ENCODE measurements at regions of chr12 and their contacts with region 1.

Region 1: DNA sequence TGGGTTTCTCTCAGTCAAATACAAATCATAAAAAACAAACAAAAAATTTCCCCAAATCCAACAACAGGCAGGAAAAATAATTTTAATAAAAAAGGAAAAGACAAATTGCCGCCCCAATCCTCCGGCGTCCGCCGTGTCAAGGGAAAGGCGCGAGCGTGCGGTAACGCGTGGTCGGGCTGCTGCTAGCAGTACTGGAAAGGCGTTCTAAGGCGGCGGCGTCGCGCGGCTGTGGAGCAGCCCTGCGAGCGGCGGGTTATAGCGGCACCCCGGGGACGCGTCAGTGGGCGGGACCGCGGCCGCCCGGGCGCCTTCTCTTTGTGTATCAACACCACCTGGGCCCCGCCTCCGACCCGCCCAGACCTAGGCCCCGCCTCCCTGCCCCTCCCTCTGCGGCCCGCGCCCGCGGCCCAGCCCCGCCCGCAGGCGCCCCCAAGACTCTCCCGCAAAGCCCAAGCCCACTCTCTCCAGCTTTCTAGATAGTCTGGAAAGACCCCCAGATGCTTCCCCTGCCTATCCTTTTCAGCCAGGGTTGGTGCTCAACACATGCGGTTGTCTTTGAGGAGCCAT is at the start of gene SLC38A2:
- DNase-seq: peak; percentile 97
- H3K4me3 Mint-ChIP-seq: peak within 1 kb of the TSS; percentile 96
- H3K27ac Mint-ChIP-seq: peak within 1 kb of the TSS; percentile 98
- H3K4me1 Mint-ChIP-seq: peaks cover 51% of the 10 kb centered on the region
- H3K27me3 Mint-ChIP-seq: no peaks in the 10 kb centered on the region
- total RNA-seq, gene SLC38A2: 196 to 206 TPM

Region 2: GRCh38 chr12:46209914-46210872 is 162.4 kb before region 1 on chr12:
- CTCF ChIA-PET with region 1: no interaction called
- intact Hi-C with region 1: loop called (anchors 1 kb)
- DNase-seq: peak; percentile 87
- H3K4me3 Mint-ChIP-seq: peak overlapping the region; percentile 60
- H3K27ac Mint-ChIP-seq: peak overlapping the region; percentile 99
- H3K4me1 Mint-ChIP-seq: peaks cover 84% of the 10 kb centered on the region
- H3K27me3 Mint-ChIP-seq: no peaks in the 10 kb centered on the region

Region 3: GRCh38 chr12:46357438-46358324 is 14.9 kb before region 1 on chr12:
- CTCF ChIA-PET with region 1: interaction called, 3 read pairs
- intact Hi-C with region 1: loop called (anchors 1 kb)
- DNase-seq: no peak
- H3K4me3 Mint-ChIP-seq: no peak overlapping the region
- H3K27ac Mint-ChIP-seq: no peak overlapping the region
- H3K4me1 Mint-ChIP-seq: peaks cover 21% of the 10 kb centered on the region
- H3K27me3 Mint-ChIP-seq: no peaks in the 10 kb centered on the region

Region 4: GRCh38 chr12:46459861-46460545 is 87.4 kb after region 1 on chr12:
- CTCF ChIA-PET with region 1: no interaction called
- intact Hi-C with region 1: loop called (anchors 1 kb)
- DNase-seq: peak; percentile 48
- H3K4me3 Mint-ChIP-seq: peak overlapping the region; percentile 71
- H3K27ac Mint-ChIP-seq: peak overlapping the region; percentile 91
- H3K4me1 Mint-ChIP-seq: peaks cover 64% of the 10 kb centered on the region
- H3K27me3 Mint-ChIP-seq: no peaks in the 10 kb centered on the region

Region 5: DNA sequence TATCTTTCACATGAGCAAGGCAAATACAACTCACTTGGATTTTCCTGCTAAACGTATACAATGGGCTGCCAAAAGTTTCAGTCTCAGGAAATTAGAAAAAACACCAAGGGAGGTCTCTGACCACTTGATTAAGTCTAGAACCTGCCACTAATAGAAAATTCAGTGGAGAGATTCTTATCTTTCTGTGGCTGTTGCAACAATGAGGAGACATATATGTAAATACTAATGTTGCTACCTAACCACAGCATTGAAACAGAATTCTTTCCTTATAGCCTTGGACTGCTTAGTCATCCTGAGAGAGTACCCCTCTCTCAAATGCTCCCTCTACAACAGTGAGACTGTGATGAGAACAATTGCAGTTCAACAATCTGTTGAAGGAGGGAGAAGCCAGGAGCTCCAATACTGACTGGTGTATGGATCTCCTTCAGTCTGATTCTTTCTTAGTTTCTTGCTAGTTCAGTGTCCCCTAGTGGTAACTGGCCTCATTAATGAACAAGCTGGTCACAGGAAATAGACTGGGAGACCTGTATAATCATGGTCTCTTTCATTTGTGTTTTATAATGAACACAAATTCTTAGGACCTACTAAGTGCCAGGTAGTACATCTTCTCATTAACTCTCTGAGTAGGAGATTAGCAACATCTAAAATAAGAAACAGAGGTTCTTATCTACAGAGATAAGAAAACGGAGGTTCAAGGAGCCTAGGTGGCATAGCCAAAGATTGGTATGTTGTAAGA is 288.7 kb after region 1 on chr12:
- CTCF ChIA-PET with region 1: interaction called, 4 read pairs
- intact Hi-C with region 1: loop called (anchors 1 kb)
- DNase-seq: peak; percentile 25
- H3K4me3 Mint-ChIP-seq: no peak overlapping the region
- H3K27ac Mint-ChIP-seq: no peak overlapping the region
- H3K4me1 Mint-ChIP-seq: peaks cover 29% of the 10 kb centered on the region
- H3K27me3 Mint-ChIP-seq: no peaks in the 10 kb centered on the region

Region 6: DNA sequence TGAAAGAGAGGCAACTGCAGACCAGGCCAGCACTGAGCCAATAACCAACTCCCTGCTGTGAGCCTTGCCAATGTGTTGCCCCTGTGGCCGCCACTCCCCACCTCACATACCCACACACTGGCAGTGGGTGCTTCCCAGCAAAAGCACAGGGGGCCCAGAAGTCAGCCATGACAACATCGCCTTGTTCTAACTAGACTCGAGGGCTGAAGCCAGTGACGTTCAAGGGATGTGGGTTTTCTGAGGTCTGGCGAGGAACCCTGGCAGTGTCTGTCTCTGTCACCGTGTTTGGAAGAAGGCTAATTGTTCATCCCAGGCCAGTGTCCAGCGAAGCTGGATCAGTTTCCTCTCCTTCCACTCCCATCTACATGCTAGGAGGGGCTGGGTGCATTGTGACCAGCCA is 1018.9 kb after region 1 on chr12:
- CTCF ChIA-PET with region 1: no interaction called
- intact Hi-C with region 1: loop called (anchors 2 kb)
- DNase-seq: peak; percentile 88
- H3K4me3 Mint-ChIP-seq: peak overlapping the region; percentile 77
- H3K27ac Mint-ChIP-seq: peak overlapping the region; percentile 100
- H3K4me1 Mint-ChIP-seq: peaks cover 90% of the 10 kb centered on the region
- H3K27me3 Mint-ChIP-seq: no peaks in the 10 kb centered on the region

Measured in activated naive CD4-positive, alpha-beta T cell treated with anti-CD3 and anti-CD28 coated beads for 36 hours (primary cell).